Thyroid gland (tissue), 4 donors: ENCODE measurements at regions of chr13 and their contacts with region 1.

Region 1: DNA sequence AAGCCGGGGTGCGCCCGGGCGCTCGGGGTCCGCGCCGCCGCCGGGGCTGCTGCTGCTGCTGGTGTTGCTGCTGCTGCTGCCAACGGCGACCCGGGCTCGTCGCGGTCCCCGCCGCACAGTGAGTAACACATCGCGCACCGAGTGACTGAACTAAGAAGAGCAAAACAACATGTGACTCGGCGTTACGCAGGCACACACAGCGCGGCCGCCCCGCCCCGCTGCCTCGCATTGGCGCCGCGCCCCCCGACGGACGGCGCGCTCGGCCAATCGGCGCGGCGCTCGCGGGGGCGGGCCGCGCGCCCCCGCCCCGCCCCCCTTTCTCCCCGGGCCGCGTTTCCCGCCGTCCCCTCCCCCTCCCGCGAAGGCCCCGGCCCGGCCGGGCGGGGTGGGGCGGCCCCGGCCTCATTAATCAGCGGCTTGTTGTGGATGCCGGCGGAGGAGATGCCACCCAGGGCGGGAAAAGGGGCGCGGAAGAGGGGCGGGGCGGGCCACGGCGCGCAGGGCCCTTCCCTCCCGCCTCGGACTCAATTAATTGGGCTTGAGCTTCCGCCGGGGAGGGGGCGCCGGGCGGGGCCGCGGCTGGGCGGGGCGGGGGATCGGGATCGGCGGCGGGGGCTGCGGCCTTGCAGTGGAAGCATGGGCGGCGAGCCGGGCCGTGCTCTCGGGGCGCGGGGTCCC is at the start of gene IRS2:
- DNase-seq: peak; percentile 95 to 96
- H3K4me3 ChIP-seq: peak within 1 kb of the TSS; percentile 65 to 84 (median 77)
- H3K27ac ChIP-seq: peak within 1 kb of the TSS; percentile 85 to 97 (median 96)
- H3K4me1 ChIP-seq: peaks cover 9 to 37% of the 10 kb centered on the region in 2 donors
- H3K27me3 ChIP-seq: no peaks in the 10 kb centered on the region
- CTCF ChIP-seq: no peak
- POLR2A ChIP-seq: peak; percentile 96 to 99
- total RNA-seq, gene IRS2: 12.9 to 29.1 (median 17.6) TPM

Region 2: GRCh38 chr13:108961542-108962125 is 825.0 kb before region 1 on chr13:
- intact Hi-C with region 1: loop called (anchors 10 kb)
- DNase-seq: no peak
- H3K4me3 ChIP-seq: no peak overlapping the region
- H3K27ac ChIP-seq: no peak overlapping the region
- H3K4me1 ChIP-seq: no peaks in the 10 kb centered on the region
- H3K27me3 ChIP-seq: no peaks in the 10 kb centered on the region
- CTCF ChIP-seq: peak; percentile 65 to 88 (median 80)
- POLR2A ChIP-seq: no peak

Region 3: DNA sequence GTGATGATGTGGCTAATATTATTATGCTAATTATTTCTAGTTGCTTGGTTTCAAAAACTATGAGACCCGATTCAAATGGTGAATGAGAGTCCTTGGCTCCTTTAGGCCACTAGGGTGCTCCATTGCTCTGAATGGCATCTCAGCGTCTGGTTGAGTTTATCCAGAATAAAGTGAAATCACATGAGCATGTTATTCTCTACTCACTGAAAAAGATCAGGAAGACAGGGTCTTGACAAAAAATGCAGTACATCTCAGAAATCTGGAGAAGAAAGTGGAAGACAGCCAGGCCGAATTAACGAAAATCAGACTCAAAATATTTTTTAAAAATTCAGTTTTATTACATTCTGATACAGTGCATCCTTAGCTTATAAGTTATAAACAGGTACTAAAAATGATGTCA is 641.0 kb before region 1 on chr13:
- intact Hi-C with region 1: loop called (anchors 10 kb)
- DNase-seq: peak; percentile 57 to 63
- H3K4me3 ChIP-seq: no peak overlapping the region
- H3K27ac ChIP-seq: no peak overlapping the region
- H3K4me1 ChIP-seq: peaks cover 0 to 4% of the 10 kb centered on the region in 2 donors
- H3K27me3 ChIP-seq: no peaks in the 10 kb centered on the region
- CTCF ChIP-seq: peak; percentile 32 to 84 (median 73)
- POLR2A ChIP-seq: no peak

Region 4: GRCh38 chr13:109840201-109840892 is 53.8 kb after region 1 on chr13:
- intact Hi-C with region 1: no loop called
- DNase-seq: no peak
- H3K4me3 ChIP-seq: no peak overlapping the region
- H3K27ac ChIP-seq: no peak overlapping the region
- H3K4me1 ChIP-seq: peaks cover 0 to 4% of the 10 kb centered on the region in 2 donors
- H3K27me3 ChIP-seq: no peaks in the 10 kb centered on the region
- CTCF ChIP-seq: no peak
- POLR2A ChIP-seq: no peak

Region 5: DNA sequence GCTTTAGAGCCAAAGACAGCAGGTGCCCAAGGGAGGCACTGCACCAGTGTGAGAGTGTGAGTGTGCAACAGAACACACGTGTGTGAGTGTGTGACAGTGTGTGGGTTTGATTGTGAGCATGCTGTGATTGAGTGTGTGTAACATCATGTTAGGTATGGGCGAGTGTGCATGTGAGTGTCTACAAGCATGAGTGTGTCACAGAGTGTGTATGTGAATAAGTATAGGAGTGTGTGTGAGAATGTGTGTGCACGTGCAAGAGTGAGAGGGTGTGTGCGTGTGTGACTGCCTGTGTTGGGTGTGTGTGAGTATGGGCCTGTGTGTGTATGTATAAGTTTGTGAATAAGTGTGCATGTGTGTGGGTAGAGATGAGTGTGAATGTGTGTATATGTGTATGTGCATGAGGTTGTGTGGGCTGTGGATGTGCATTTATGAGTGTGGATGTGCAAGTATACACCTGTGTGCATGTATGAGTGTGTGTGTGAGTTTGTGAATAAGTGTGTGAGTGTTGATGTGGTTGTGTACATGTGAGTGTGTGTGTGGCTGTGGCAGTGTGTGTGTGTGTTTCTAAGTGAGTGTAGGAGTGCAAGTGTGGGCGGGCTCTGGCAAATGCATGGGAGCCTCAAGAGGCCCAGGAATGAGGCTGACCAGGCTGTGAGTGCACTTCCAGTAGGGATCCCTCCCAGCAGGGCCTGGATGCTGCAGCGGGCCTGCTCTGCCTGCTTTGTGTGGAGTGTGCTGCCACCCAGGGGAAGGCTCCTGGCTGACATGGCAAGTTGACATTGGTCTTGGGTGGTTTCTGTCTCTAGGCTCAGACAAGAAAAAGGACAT is 322.0 kb after region 1 on chr13:
- intact Hi-C with region 1: loop called (anchors 5 kb)
- DNase-seq: peak; percentile 82 to 90
- H3K4me3 ChIP-seq: no peak overlapping the region
- H3K27ac ChIP-seq: no peak overlapping the region
- H3K4me1 ChIP-seq: peaks cover 15 to 22% of the 10 kb centered on the region in 2 donors
- H3K27me3 ChIP-seq: no peaks in the 10 kb centered on the region
- CTCF ChIP-seq: peak; percentile 18 to 88 (median 76)
- POLR2A ChIP-seq: no peak